Lower leg skin (tissue), 4 donors: ENCODE measurements at regions of chr9 and their contacts with region 1.

Region 1: GRCh38 chr9:37784616-37785483 is at the start of gene EXOSC3:
- DNase-seq: peak; percentile 85 to 97
- H3K4me3 ChIP-seq: peak within 1 kb of the TSS; percentile 87
- CTCF ChIP-seq: no peak
- POLR2A ChIP-seq: no peak
- total RNA-seq, gene EXOSC3: 31.0 to 52.7 (median 47.7) TPM

Region 2: DNA sequence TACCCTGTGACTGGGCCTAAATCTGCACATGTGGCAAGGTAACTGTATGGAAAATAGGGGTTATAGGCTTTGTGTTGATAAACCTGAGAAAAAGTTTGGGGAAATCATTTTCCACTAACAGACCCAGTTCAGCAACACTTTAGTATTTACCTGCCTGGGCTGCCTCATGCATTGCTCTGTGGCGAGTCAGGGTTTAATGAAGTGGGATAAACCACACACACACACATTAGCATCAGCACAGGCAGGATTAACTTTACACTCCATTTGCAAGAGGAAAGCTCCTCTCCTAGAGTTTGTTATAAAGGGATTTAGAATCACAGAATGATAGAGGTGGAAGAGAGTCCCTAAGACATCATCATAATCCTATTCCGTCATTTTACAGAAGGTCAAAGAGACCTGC is 684.5 kb before region 1 on chr9:
- intact Hi-C with region 1: no loop called
- DNase-seq: no peak
- H3K4me3 ChIP-seq: no peak overlapping the region
- CTCF ChIP-seq: no peak
- POLR2A ChIP-seq: no peak

Region 3: DNA sequence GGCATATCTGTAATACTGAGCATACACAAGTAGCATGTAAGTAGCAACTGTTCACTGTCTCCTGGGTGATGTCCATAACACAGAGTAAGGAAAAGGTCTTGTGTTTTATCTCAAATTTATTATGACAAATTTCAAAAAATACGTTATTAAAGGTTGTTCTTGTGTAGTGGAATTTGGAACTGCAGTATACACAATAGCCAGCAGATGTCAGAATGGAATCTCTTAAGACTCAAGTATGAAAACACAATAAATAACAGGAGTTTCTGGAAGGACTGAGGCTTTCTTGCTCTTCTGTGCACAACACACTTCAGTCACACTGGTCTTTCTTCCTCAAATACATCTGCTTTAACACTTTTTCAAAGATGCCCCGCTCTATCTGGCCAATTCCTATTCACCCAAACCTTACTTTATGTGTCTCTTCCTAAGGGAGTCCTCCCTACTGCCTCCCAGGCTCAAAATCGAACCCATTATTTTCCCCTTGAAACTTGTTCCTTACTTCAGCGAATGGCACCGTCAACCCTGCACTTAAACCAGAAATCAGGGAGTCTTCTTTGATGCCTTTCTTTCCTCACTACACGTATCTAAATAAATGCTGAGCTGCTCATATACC is 202.2 kb before region 1 on chr9:
- intact Hi-C with region 1: loop called (anchors 10 kb)
- DNase-seq: no peak
- H3K4me3 ChIP-seq: no peak overlapping the region
- CTCF ChIP-seq: no peak
- POLR2A ChIP-seq: no peak

Region 4: DNA sequence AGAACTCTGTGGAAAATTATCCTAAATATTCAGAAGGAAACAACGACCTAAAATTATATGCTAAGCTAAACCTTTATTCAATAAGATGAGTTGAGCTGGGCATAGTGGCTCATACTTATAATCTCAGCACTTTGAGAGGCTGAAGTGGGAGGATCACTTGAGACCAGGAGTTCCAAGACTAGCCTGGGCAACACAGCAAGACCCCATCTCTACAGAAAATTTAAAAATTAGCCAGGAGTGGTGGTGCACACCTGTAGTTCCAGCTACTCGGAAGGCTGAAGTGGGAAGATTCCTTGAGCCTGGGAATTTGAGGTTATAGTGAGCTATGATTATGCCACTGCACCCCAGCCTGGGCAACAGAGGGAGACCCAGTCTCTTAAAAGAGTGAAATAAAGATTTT is 67.4 kb after region 1 on chr9:
- intact Hi-C with region 1: no loop called
- DNase-seq: no peak
- H3K4me3 ChIP-seq: no peak overlapping the region
- CTCF ChIP-seq: no peak
- POLR2A ChIP-seq: no peak